Activated naive CD8-positive, alpha-beta T cell treated with anti-CD3 and anti-CD28 coated beads, Interleukin-2, amount 10 ng/mL, durations not matched to agents 7 days and 5 days (primary cell): ENCODE measurements at regions of chr15 and their contacts with region 1.

Region 1: GRCh38 chr15:60397772-60398445 is at the start of gene ANXA2:
- DNase-seq: peak; percentile 85
- ATAC-seq: peak; percentile 83
- H3K4me3 Mint-ChIP-seq: peak within 1 kb of the TSS; percentile 97
- H3K27ac Mint-ChIP-seq: peak within 1 kb of the TSS; percentile 96
- H3K4me1 Mint-ChIP-seq: peaks cover 30% of the 10 kb centered on the region
- H3K27me3 Mint-ChIP-seq: peaks cover 7% of the 10 kb centered on the region
- total RNA-seq, gene ANXA2: 230 to 242 TPM

Region 2: DNA sequence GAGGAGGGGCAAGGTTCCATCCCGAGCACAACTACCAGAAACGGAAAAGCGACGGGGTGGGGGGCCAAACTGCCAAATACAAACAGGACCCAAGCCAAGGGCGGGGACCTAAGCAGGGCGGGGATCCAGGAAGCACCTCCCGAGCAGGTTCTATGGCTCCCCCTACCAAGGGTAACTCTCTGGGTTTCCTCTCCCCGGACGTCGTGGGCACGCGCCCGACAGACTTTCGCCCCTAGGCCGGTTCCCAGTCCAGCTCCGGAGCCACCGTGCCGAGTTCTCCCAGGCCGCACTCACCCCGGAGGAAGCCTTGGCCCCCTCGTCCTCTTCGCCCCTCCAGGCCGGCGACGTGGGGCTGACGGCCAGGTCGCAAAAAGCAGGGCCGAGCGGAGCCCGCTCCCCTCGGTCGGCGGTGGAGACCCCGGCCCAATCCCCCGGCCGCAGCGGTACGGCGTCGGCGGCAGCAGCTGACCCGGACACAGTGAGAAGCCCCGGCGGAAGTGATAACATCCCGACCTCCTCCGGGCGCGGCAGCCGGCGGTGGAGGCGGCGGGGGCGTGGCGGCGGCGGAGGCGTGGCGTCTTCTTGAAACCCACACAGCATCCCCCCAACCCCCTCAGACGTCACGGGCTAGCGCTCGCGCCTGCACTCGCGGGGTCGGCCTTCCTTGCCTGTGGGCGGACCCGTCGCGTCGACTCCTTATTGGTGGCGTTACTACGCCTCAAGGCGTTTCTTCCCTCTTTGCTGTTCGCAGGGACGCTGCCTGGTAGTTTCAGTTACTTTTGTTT is 708.9 kb before region 1 on chr15 and contains the start of gene BNIP2:
- POLR2A ChIA-PET with region 1: interaction called, 11 read pairs
- DNase-seq: peak; percentile 99
- ATAC-seq: peak; percentile 90
- H3K4me3 Mint-ChIP-seq: peak within 1 kb of the TSS; percentile 93
- H3K27ac Mint-ChIP-seq: peak within 1 kb of the TSS; percentile 95
- H3K4me1 Mint-ChIP-seq: peaks cover 30% of the 10 kb centered on the region
- H3K27me3 Mint-ChIP-seq: no peaks in the 10 kb centered on the region
- total RNA-seq, gene BNIP2: 79.7 to 80.2 TPM

Region 3: DNA sequence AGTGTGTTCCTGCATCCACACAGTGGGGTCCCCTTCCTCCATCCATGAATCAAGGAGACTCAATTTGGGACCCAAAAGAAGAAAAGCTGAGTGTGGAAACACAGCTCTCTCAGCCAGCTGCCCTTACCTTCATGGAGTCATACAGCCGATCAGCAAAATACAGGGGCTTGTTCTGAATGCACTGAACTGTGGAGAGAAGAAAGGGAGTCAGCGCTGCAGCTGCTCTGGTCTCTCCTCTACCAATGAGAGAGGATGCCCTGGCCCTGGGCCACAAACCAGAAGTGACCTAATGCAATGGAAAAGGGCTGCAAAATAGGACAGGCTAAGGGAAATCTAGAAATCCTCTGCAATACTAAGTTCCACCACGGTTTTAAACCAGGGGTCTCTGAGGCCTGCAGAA is 46.8 kb before region 1 on chr15:
- POLR2A ChIA-PET with region 1: no interaction called
- DNase-seq: no peak
- ATAC-seq: no peak
- H3K4me3 Mint-ChIP-seq: no peak overlapping the region
- H3K27ac Mint-ChIP-seq: no peak overlapping the region
- H3K4me1 Mint-ChIP-seq: peaks cover 6% of the 10 kb centered on the region
- H3K27me3 Mint-ChIP-seq: no peaks in the 10 kb centered on the region

Region 4: DNA sequence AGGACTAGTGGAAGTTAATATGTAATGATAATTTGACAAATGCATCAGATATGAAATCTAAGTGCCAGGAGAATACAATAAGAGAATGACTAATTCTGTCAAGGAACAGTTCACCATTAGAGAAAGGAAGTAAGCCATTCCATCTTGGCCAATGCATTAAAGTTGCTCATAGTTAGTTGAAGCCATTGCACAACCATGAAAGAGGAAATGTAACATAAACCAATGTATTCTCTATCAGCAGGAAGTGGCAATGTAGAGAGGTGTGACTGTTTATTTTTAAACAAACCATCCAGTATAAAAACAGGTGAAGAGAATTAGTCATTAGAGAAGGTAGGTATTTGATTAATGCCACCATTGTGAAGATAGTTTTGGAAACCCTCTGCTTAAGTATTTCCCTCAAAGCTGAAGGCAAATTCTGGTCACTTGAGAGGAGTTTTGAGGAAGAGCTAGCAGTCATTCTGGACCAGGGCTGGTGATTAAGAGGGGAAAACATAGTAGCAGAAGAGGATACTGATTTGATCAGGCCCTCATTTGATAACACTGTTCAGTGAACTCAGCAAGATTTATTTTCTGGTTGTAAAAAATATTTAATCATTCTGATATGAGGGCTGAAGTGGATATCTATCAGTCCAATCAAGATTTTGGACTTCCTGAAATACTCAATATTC is 10.7 kb after region 1 on chr15:
- POLR2A ChIA-PET with region 1: interaction called, 46 read pairs
- DNase-seq: no peak
- ATAC-seq: peak; percentile 90
- H3K4me3 Mint-ChIP-seq: peak overlapping the region; percentile 43
- H3K27ac Mint-ChIP-seq: peak overlapping the region; percentile 80
- H3K4me1 Mint-ChIP-seq: peaks cover 12% of the 10 kb centered on the region
- H3K27me3 Mint-ChIP-seq: no peaks in the 10 kb centered on the region

Region 5: GRCh38 chr15:60478566-60479360 is 80.9 kb after region 1 on chr15 and contains the start of gene ICE2:
- POLR2A ChIA-PET with region 1: interaction called, 31 read pairs
- DNase-seq: peak; percentile 97
- ATAC-seq: peak; percentile 89
- H3K4me3 Mint-ChIP-seq: peak within 1 kb of the TSS; percentile 98
- H3K27ac Mint-ChIP-seq: peak within 1 kb of the TSS; percentile 99
- H3K4me1 Mint-ChIP-seq: peaks cover 42% of the 10 kb centered on the region
- H3K27me3 Mint-ChIP-seq: no peaks in the 10 kb centered on the region
- total RNA-seq, gene ICE2: 65.1 to 81.4 TPM

Region 6: GRCh38 chr15:60548101-60548500 is 150.2 kb after region 1 on chr15:
- POLR2A ChIA-PET with region 1: interaction called, 10 read pairs
- DNase-seq: no peak
- ATAC-seq: peak; percentile 76
- H3K4me3 Mint-ChIP-seq: peak overlapping the region; percentile 82
- H3K27ac Mint-ChIP-seq: peak overlapping the region; percentile 98
- H3K4me1 Mint-ChIP-seq: peaks cover 84% of the 10 kb centered on the region
- H3K27me3 Mint-ChIP-seq: no peaks in the 10 kb centered on the region